Astrocyte of the spinal cord (primary cell): ENCODE measurements at regions of chr6 and their contacts with region 1.

Region 1: DNA sequence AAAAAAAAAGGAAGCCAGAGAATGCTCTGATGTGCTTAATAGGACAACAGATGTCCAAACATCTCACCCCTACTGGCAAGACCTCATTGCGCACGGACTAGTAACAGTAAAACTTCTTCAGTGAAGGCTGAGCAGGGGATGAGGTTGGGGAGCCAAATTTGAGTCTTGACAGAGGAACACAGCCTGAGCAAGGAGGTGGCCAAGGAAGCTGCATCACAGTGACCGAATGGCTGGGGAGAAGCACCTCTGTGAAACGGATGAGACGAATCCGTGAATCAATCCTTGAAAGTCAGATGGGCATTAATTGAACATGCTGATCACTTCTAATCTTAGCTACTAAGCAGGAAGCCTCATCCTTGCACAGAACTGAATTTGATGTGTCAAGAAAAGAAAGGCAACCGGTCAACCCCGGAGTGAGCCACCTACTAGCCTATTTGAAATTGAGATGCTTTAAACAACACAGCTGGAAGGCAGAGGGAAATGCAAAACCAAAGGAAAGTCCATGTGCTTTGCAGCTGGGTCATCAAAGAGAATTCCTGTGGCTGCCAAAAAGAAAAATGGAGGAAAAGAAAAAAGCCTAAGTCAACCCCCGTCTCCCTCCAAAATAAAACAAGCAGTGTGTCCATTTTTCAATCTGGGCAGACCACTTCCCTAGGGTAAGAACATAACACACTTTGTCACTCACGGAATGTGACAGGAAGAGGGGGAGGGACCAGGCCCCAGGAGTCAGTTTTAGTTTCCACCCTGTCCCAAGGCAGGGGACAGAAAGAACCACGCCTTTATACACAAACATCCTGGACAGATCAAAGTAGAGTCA is 29.5 kb downstream of the PXDC1 start:
- DNase-seq: peak; percentile 70
- H3K4me3 ChIP-seq: no peak overlapping the region
- CTCF ChIP-seq: no peak

Region 2: GRCh38 chr6:3281631-3282475 is 440.2 kb before region 1 on chr6:
- in situ Hi-C with region 1: loop called (anchors 25 kb)
- DNase-seq: peak; percentile 95
- H3K4me3 ChIP-seq: no peak overlapping the region
- CTCF ChIP-seq: no peak

Region 3: GRCh38 chr6:3542032-3542640 is 179.9 kb before region 1 on chr6:
- in situ Hi-C with region 1: no loop called
- DNase-seq: no peak
- H3K4me3 ChIP-seq: no peak overlapping the region
- CTCF ChIP-seq: no peak